ENCODE measurements at regions of chr18 and their contacts with region 1.

Region 1: DNA sequence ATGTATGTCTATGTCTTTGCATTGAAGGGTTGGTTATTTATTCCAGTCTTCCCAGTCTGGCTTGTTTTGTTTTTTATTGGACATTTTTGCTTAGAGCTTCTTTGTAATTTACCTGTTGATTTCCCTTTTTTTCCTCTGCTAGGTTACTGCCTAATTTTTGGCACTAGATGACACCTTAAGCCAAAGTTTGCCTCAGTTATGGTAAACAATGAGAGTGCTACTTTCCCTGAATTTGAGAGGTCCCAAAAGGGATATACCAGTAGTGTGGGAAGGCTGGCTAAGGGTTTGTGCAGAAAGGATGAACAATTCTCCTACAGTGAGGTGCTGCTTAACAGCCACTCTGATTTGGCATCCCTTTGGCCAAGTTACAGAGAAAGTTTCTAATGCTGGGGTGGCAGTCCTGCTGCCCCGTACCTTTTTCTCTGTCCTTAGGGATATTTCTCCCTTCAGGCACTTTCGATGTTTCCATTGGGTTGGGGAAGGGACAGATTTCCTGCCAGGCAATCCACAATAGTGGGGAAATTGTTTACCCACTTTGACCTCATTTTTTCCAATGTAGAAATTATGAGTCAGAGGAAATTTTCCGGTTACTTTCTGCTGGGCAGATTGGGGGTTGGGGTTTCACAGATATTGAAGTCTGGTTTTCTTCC is 354.9 kb downstream of the PTPRM start:
- DNase-seq: peak; percentile 93
- H3K4me3 Mint-ChIP-seq: peak overlapping the region; percentile 60
- H3K27ac Mint-ChIP-seq: peak overlapping the region; percentile 96
- H3K4me1 Mint-ChIP-seq: peaks cover 65% of the 10 kb centered on the region
- H3K27me3 Mint-ChIP-seq: no peaks in the 10 kb centered on the region
- CTCF ChIP-seq: no peak

Region 2: DNA sequence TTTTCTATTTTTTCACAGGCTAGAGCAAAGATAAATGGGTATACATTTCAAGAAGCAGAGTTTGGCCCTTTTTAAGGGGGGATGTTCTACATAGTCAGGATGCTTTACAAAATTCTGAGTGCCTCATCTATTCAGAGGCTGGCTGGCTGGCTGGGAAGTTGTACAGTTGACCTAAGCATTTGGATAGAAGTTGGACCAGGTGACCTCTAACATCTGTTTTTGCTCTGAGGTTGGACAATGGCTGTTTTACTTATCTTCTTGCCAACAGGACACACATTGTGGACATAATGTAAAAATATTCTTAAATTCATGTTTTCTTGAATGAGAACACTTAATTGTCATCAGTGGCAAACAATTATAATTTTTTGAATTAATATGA is 149.6 kb before region 1 on chr18:
- CTCF ChIA-PET with region 1: no interaction called
- POLR2A ChIA-PET with region 1: no interaction called
- intact Hi-C with region 1: no loop called
- DNase-seq: no peak
- H3K4me3 Mint-ChIP-seq: no peak overlapping the region
- H3K27ac Mint-ChIP-seq: no peak overlapping the region
- H3K4me1 Mint-ChIP-seq: no peaks in the 10 kb centered on the region
- H3K27me3 Mint-ChIP-seq: no peaks in the 10 kb centered on the region
- CTCF ChIP-seq: no peak

Region 3: DNA sequence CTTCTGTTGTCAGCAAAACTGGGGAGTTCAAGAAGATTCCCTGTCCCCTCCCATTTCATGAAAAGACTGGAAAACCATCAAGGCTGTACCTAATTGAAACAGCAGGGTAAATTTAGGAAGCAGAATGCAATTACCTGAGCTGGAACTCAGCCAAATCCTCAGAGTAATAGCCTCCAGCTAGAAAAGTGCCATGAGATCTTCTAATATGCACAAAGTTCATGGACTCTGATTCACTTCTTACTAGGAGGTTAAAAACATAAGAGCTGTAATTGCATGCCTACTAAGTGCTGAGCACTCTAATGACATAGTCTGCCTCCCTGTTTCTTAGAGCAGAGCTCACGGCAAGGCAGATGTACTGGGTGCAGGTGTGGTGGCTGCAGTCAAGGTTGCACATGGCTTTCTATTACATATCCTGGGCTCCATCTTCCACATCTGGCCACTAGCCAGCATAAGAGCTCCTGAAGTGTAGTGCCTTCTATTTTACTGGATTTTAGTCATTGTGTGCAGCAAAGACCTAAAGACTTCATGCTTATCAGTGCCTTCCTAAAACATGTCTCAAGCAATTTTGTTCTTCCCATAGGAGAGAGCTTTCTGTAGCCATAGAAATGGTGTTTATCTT is 13.3 kb before region 1 on chr18:
- CTCF ChIA-PET with region 1: interaction called, 4 read pairs
- POLR2A ChIA-PET with region 1: interaction called, 46 read pairs
- intact Hi-C with region 1: no loop called
- DNase-seq: peak; percentile 70
- H3K4me3 Mint-ChIP-seq: no peak overlapping the region
- H3K27ac Mint-ChIP-seq: no peak overlapping the region
- H3K4me1 Mint-ChIP-seq: peaks cover 24% of the 10 kb centered on the region
- H3K27me3 Mint-ChIP-seq: no peaks in the 10 kb centered on the region
- CTCF ChIP-seq: no peak

Region 4: GRCh38 chr18:7941533-7941932 is 19.5 kb after region 1 on chr18:
- CTCF ChIA-PET with region 1: interaction called, 6 read pairs
- POLR2A ChIA-PET with region 1: interaction called, 15 read pairs
- intact Hi-C with region 1: loop called (anchors 2 kb)
- DNase-seq: peak; percentile 91
- H3K4me3 Mint-ChIP-seq: peak overlapping the region; percentile 35
- H3K27ac Mint-ChIP-seq: peak overlapping the region; percentile 96
- H3K4me1 Mint-ChIP-seq: peaks cover 58% of the 10 kb centered on the region
- H3K27me3 Mint-ChIP-seq: no peaks in the 10 kb centered on the region
- CTCF ChIP-seq: no peak

Region 5: GRCh38 chr18:7946734-7947377 is 24.8 kb after region 1 on chr18:
- CTCF ChIA-PET with region 1: interaction called, 4 read pairs
- POLR2A ChIA-PET with region 1: interaction called, 15 read pairs
- intact Hi-C with region 1: loop called (anchors 2 kb)
- DNase-seq: peak; percentile 60
- H3K4me3 Mint-ChIP-seq: peak overlapping the region; percentile 66
- H3K27ac Mint-ChIP-seq: peak overlapping the region; percentile 82
- H3K4me1 Mint-ChIP-seq: peaks cover 54% of the 10 kb centered on the region
- H3K27me3 Mint-ChIP-seq: no peaks in the 10 kb centered on the region
- CTCF ChIP-seq: no peak